Activated CD4-positive, alpha-beta memory T cell treated with anti-CD3 and anti-CD28 coated beads for 36 hours (primary cell): ENCODE measurements at regions of chr5 and their contacts with region 1.

Region 1: DNA sequence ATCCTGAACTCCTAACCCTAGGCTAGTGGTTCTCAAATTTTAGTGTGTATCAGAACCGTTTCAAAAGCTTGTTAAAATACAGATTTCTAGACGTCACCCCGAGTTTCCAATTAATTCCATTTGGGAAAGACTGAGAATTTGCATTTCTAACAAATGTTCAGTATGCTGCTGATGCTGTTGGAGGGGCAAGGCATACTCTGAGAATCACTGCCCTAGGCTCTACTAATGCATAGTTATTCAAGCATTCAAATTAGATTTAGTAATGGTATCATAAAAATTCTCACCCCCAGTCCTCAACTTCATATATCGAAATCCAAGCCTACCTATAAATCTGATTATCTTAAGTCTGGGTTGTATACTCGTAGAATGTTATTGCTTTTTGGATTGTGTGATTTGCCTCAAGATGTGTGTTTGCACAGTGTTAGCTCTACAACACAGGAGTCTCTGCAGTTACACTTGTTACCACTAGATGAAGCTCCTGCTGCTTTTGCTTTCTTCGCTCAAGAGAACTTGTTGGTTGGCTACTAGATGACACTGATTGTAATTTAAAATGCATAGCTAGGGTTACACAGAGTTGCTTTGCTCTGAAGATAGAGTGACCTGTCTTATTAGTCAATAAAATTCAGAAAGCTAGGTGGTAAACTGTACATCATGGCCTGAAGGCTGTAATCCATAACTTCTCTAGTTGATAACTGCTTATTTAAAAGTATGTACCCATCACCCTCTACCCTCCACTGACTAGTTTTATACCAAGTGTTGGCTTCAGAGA is 7.5 kb upstream of the ERAP2 start:
- DNase-seq: no peak
- H3K4me3 Mint-ChIP-seq: no peak overlapping the region
- H3K27ac Mint-ChIP-seq: no peak overlapping the region
- H3K4me1 Mint-ChIP-seq: peaks cover 50% of the 10 kb centered on the region
- H3K27me3 Mint-ChIP-seq: no peaks in the 10 kb centered on the region

Region 2: DNA sequence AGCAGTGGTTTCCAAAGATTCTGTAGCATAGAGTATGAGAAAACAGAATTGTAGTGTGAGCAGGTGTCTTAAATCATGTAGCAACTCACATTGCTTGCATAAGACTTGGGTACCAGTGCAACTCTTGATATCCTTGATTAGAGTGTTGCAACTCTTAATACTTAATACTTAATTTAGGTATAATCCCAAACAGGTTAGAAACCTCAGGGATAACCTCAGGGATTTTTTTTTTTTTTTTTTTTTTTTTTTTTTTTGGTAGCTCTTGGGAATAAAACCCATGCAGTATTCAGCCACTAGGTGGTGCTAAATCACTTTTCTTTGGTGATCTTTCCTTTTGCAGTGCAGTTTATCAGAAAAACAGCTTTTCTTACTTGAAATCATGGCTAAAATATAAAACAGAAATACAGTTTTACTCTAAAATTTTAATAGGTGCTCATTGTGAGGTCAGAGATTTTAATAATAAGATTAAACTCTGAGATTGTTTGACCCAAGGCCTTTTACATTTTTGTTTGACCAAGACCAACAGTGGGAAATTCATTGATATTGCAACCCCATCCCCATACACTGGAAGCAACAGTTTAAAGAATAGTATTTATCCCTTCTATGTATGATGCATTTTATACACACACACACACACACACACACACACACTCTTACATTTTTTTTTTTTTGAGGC is 116.3 kb before region 1 on chr5:
- CTCF ChIA-PET with region 1: interaction called, 22 read pairs
- POLR2A ChIA-PET with region 1: no interaction called
- intact Hi-C with region 1: loop called (anchors 2 kb)
- DNase-seq: no peak
- H3K4me3 Mint-ChIP-seq: no peak overlapping the region
- H3K27ac Mint-ChIP-seq: no peak overlapping the region
- H3K4me1 Mint-ChIP-seq: peaks cover 15% of the 10 kb centered on the region
- H3K27me3 Mint-ChIP-seq: no peaks in the 10 kb centered on the region

Region 3: DNA sequence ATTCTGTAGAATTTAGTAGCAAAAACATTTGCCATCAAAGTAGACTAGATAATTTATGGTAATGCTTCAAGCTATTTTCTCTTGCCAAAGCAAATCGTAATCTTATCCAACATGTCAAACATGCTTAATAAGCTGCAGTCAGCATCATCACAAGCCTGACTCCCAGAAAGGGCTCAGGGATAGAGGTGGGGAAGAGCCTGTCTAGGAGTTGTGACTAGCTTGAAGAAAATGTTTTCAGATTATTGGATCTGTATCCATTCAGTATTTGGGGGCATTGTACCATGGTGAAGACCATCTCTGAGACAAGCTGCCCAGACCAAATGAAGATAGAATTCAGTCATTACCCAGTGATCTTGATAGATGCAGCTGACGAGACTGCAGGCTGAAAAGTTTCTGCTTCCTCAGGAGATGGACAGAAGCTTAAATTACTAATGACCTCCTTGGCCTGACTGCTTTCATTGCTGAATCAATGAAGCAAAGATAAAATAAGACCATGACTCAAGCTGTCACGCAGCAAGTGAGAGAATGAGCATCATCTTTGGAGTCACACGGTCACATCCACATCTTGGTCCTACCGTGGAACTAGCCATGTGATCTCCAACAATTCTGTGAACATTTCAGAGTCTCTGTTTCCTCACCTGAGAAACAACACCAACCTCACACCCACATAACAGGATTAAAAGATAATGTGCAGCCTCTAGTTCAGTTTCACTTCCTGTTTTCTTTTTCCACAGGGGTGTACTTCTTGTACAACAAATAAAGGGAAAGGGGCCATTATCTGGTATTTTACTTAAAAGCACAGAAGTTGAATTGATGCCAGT is 16.9 kb after region 1 on chr5:
- CTCF ChIA-PET with region 1: interaction called, 25 read pairs
- POLR2A ChIA-PET with region 1: interaction called, 5 read pairs
- intact Hi-C with region 1: loop called (anchors 1 kb)
- DNase-seq: peak; percentile 50
- H3K4me3 Mint-ChIP-seq: peak overlapping the region; percentile 35
- H3K27ac Mint-ChIP-seq: peak overlapping the region; percentile 87
- H3K4me1 Mint-ChIP-seq: peaks cover 57% of the 10 kb centered on the region
- H3K27me3 Mint-ChIP-seq: no peaks in the 10 kb centered on the region

Region 4: DNA sequence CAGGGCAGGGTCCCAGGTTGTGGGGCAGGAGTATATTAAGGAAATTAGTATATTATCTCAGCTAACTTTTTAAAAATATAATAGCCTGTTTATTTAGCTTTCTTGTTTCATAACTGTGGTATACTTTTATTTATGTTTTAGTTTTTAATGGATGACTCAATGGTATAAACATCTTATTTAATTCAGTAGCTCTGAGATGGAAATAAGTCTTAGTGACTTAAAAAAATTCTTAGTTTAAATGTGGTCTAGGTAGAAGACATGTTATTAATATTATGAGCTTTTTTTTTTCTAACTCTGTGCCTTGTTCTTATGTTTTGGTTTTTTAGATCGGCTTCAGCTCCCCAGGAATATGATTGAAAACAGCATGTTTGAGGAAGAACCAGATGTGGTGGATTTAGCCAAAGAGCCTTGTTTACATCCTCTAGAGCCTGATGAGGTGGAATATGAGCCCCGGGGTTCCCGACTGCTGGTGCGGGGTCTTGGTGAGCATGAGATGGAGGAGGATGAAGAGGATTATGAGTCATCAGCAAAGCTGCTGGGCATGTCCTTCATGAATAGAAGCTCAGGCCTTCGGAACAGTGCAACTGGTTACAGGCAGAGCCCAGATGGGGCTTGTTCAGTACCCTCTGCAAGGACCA is 110.1 kb after region 1 on chr5:
- CTCF ChIA-PET with region 1: interaction called, 12 read pairs
- POLR2A ChIA-PET with region 1: no interaction called
- intact Hi-C with region 1: no loop called
- DNase-seq: no peak
- H3K4me3 Mint-ChIP-seq: no peak overlapping the region
- H3K27ac Mint-ChIP-seq: no peak overlapping the region
- H3K4me1 Mint-ChIP-seq: peaks cover 33% of the 10 kb centered on the region
- H3K27me3 Mint-ChIP-seq: no peaks in the 10 kb centered on the region

Region 5: GRCh38 chr5:97044052-97044451 is 175.3 kb after region 1 on chr5:
- CTCF ChIA-PET with region 1: interaction called, 6 read pairs
- POLR2A ChIA-PET with region 1: no interaction called
- intact Hi-C with region 1: loop called (anchors 1 kb)
- DNase-seq: no peak
- H3K4me3 Mint-ChIP-seq: no peak overlapping the region
- H3K27ac Mint-ChIP-seq: no peak overlapping the region
- H3K4me1 Mint-ChIP-seq: no peaks in the 10 kb centered on the region
- H3K27me3 Mint-ChIP-seq: no peaks in the 10 kb centered on the region

Region 6: DNA sequence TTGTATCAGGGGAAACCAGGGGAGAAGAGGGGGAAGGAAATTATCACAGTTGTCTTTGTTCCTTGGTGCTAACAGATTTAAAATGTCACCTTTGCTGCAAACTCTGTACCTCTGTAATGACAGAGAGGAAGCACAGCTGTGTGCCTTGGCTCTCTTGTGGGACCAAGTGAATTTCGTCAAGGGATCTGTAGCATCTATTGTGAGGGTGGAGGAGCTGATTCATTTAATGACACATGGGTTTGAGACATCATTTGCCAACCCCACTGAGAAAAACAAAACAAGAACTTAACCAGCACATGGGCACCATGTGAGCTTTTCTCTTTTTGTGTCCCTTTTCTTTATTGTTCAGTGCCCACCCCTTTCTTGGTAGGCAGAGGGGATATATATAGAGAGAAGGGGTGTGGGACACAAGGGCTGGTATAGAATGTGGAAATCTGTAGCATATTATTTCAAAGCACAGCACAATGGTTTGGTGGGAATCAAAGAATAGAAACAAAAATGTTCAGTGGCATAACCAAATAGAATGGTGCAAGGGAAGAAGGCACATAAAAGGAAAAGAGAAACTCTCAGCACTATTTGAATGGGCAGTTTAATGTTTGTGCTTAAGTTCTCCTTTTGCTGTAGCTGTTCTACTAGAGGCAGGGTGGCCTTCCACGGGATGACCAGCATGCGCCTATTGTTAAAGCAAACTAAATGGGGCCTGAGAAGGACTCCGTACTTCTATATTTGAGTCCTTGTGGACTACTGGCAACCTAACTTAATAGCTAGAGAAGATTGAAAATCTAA is 210.4 kb after region 1 on chr5:
- CTCF ChIA-PET with region 1: no interaction called
- POLR2A ChIA-PET with region 1: no interaction called
- intact Hi-C with region 1: no loop called
- DNase-seq: no peak
- H3K4me3 Mint-ChIP-seq: no peak overlapping the region
- H3K27ac Mint-ChIP-seq: no peak overlapping the region
- H3K4me1 Mint-ChIP-seq: peaks cover 7% of the 10 kb centered on the region
- H3K27me3 Mint-ChIP-seq: peaks cover 6% of the 10 kb centered on the region

Region 7: GRCh38 chr5:97162045-97162444 is 293.3 kb after region 1 on chr5:
- CTCF ChIA-PET with region 1: interaction called, 187 read pairs
- POLR2A ChIA-PET with region 1: no interaction called
- intact Hi-C with region 1: loop called (anchors 1 kb)
- DNase-seq: peak; percentile 64
- H3K4me3 Mint-ChIP-seq: no peak overlapping the region
- H3K27ac Mint-ChIP-seq: no peak overlapping the region
- H3K4me1 Mint-ChIP-seq: peaks cover 17% of the 10 kb centered on the region
- H3K27me3 Mint-ChIP-seq: no peaks in the 10 kb centered on the region